Aorta (tissue), 5 donors: ENCODE measurements at regions of chr10 and their contacts with region 1.

Region 1: GRCh38 chr10:89793649-89794254 is 92.4 kb downstream of the KIF20B start:
- DNase-seq: no peak
- ATAC-seq: peak; percentile 79
- H3K4me3 ChIP-seq: no peak overlapping the region
- H3K27ac ChIP-seq: no peak overlapping the region
- H3K4me1 ChIP-seq: peaks cover 0 to 3% of the 10 kb centered on the region in 2 donors
- H3K27me3 ChIP-seq: no peaks in the 10 kb centered on the region

Region 2: DNA sequence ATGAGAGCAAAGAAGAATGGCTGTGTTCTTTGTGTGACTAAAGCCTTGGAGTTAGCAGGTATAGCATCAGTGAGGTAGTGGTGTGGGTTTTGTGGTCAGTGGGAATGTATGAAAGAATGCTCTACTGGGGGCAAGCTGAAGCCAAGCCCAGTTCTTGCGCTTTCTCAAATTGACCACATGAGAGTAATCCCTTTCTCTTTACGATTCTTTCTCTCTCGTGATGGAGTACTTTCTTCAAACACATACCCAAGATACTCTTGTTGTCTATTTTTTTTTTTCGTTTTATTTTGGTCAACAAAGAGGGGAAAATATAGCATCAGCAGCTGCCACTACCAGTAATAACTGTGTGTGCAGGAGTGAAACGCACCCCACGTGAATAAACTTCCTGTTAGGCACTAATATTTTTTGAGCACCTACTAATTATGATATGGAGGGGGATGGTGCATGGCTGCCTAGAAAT is 140.3 kb before region 1 on chr10:
- intact Hi-C with region 1: no loop called
- DNase-seq: no peak
- ATAC-seq: no peak
- H3K4me3 ChIP-seq: no peak overlapping the region
- H3K27ac ChIP-seq: no peak overlapping the region
- H3K4me1 ChIP-seq: no peaks in the 10 kb centered on the region
- H3K27me3 ChIP-seq: no peaks in the 10 kb centered on the region

Region 3: DNA sequence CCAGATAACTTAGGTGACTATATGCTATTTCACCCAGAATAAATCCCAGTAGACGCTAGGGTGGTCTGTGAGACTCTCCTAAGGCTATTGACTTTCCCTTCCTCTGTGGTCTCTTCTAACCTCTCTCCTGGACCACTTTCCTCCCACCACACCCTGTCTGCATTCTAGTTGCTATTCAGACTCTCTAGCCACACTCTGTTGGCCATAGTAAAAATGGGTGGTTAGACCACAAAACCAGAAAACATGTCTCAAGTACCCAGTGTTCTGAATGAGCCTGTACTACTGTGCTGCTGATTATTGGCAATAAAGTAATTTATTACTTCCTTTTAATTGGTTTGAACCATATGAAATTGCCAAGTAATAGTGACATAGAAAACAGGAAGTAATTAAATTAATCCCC is 148.5 kb after region 1 on chr10:
- intact Hi-C with region 1: no loop called
- DNase-seq: no peak
- ATAC-seq: no peak
- H3K4me3 ChIP-seq: no peak overlapping the region
- H3K27ac ChIP-seq: no peak overlapping the region
- H3K4me1 ChIP-seq: peaks cover 0 to 8% of the 10 kb centered on the region in 2 donors
- H3K27me3 ChIP-seq: no peaks in the 10 kb centered on the region

Region 4: DNA sequence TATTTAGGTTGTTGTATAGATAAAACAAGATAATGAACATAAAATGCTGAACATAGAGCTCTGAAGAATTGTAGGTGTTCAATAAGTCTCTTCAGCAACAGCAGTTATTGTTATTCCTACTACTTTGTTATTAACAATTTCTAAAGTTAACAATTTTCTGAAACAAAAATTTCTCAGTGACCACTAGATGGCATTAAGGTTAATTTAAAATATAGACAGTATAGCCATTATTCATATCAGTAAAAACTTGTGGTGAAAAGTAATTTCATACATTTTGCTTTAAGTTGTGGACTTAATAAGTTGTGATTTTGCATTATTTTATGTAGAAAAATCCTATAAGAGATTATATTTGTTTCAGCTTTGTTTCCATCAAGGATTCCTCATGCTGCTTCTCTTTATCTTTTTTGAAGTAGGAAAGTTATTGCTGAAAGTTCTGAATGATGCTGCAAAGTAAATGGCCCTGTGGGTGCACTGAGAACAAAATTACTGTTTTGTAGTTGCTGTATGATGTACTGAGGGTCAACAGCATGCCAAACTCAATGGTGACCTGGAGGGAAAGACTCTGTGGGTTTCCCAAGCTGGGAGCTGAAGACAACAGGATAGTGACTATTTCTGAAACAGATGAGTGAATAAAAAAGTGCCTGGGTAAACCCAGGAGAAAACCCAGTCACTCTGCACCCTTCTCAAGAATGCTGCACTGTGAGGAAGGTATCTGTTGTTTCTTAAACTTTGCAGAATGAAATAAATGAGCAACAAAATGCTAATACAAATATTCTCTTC is 161.2 kb after region 1 on chr10:
- intact Hi-C with region 1: loop called (anchors 10 kb)
- DNase-seq: no peak
- ATAC-seq: no peak
- H3K4me3 ChIP-seq: no peak overlapping the region
- H3K27ac ChIP-seq: no peak overlapping the region
- H3K4me1 ChIP-seq: no peaks in the 10 kb centered on the region
- H3K27me3 ChIP-seq: no peaks in the 10 kb centered on the region

Region 5: DNA sequence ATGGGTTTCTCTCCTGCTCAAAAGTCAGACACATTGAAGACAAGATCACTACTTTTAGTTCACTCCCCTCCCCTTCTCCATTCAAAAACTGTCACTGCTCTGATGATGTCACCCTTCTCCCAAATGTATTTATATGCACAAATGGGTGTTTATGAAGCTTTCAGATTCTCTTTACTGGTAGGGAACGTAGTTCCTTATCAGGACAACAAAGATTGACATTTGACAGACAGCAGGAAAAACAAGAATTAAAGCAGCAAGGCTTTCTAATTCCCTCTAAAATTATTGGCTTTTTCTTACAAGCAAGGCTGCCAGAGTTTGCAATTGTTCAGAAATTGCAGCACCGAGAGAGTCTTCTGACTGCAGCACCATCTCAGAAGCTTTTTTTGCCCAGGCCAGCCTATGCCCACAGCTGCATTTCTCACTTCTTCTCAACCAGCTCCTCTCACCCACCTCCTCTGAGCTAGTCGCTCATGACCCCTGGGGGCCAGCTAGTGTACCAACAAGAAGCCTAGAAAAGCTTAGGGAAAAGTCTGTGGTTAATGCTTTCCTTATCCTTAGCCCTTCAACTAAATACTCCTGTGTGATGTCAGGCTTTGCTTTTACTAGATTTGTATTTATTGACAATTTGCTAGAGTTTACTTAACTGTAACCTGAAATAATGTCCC is 799.0 kb after region 1 on chr10:
- intact Hi-C with region 1: loop called (anchors 5 kb)
- DNase-seq: peak; percentile 77 to 85
- ATAC-seq: peak; percentile 70
- H3K4me3 ChIP-seq: no peak overlapping the region
- H3K27ac ChIP-seq: no peak overlapping the region
- H3K4me1 ChIP-seq: no peaks in the 10 kb centered on the region
- H3K27me3 ChIP-seq: no peaks in the 10 kb centered on the region

Region 6: DNA sequence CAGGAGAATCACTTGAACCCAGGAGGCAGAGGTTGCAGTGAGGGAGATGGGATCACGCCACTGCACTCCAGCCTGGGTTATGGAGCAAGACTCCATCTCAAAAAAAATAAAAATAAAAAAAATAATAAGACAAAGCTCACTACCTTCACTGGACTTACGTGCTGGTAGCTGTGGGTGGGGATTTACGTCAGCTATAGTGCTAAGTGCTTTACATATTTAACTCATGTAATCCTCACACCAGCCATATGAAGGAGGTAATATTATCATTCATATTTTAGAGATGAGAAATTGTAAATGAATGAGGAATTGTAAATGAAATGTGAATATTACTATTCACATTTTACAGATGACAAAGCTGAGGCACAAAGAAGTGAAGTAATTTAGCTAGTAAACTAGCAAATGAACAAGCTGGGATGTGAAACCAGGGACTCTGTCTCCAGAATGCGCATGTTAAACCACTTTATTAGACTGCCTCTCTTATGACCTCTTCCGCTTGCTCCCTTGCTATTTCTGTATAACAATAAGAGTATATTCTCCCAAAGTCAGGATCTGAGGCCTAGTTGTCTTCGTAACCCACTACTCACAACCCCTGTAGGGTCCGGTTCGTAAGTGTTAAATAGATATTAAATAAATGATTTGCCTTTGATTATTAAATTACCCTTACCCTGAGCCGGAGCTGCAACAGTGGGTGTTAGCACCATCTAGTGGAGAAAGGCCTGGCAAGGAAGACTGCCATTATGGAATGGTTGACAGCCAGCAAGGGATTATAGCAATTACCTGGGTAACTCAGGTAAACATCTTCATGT is 993.8 kb after region 1 on chr10:
- intact Hi-C with region 1: loop called in 1 of 2 experiments (anchors 5 kb)
- DNase-seq: no peak
- ATAC-seq: no peak
- H3K4me3 ChIP-seq: no peak overlapping the region
- H3K27ac ChIP-seq: no peak overlapping the region
- H3K4me1 ChIP-seq: no peaks in the 10 kb centered on the region
- H3K27me3 ChIP-seq: no peaks in the 10 kb centered on the region

Region 7: DNA sequence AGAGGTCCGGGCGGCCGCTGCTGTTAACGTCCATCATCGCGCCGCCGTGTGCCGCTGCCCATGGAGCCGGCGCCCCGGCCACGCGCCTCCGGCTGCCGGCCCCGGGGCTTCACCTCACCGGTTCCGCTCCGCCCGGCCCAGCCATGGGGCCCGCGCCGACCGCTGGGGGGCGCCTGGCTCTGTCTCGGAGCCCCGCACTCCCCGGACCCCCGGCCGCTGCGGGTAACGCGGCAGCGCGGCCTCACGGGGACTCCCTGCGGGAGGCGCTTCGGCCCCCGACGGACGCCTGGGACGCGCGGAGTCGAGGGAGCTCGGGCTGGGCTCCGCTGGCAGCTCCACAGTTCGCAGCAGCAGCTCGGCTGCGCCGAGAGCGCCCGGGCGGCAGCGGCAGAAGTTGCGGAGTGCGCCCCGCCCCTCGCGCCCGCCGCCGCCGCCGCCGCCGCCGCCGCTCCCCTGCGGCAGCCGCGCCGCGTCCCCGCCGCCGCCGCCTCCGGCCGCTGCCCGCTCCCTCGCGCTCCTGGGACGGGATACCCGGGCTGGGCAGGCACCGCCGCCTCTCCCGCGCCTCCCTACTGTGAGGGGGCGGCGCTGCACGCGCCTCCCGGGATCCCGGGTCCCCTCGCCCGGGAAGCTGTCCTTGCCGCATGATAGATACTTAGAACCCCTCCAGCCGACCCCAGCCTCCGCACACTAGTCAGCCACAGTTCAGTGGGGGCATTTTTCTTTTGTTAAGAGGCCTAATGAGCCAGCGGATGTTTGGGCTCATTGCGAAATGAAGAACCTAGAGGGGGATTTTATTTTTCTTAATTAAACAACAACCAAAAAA is 1064.1 kb after region 1 on chr10 and contains the start of gene HTR7:
- intact Hi-C with region 1: loop called (anchors 5 kb)
- DNase-seq: peak; percentile 73 to 89
- ATAC-seq: peak; percentile 86
- H3K4me3 ChIP-seq: peak within 1 kb of the TSS; percentile 85 to 88
- H3K27ac ChIP-seq: peak within 1 kb of the TSS in 1 of 2 donors; percentile 34
- H3K4me1 ChIP-seq: no peaks in the 10 kb centered on the region
- H3K27me3 ChIP-seq: no peaks in the 10 kb centered on the region
- total RNA-seq, gene HTR7: 1.3 to 3.1 TPM

Region 8: GRCh38 chr10:90862908-90863514 is 1069.3 kb after region 1 on chr10:
- intact Hi-C with region 1: loop called (anchors 5 kb)
- DNase-seq: no peak
- ATAC-seq: no peak
- H3K4me3 ChIP-seq: no peak overlapping the region
- H3K27ac ChIP-seq: no peak overlapping the region
- H3K4me1 ChIP-seq: no peaks in the 10 kb centered on the region
- H3K27me3 ChIP-seq: no peaks in the 10 kb centered on the region